Right ventricle myocardium superior (tissue), 1 donor: ENCODE measurements at regions of chr13 and their contacts with region 1.

Region 1: GRCh38 chr13:48595431-48596429 is 58.0 kb upstream of the CYSLTR2 start:
- DNase-seq: peak; percentile 66
- ATAC-seq: peak; percentile 96

Region 2: DNA sequence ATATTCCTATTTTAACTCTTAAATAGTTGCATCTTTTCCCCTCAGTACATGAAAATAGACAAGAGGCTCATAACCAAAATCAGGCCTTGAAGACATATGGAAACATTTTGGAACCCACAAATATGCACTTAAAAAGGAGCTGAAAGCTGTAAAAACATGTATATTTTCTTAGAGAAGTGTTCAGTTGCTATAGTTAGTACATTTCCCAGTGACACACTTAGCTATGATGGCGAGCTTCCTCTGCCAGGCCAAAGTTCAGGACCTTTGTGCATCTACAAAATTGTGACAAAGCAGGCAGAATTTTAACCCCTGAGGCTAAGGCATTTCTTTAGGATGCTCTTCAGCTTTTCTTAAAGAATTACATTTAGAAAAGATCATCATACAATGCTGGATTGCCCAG is 117.3 kb before region 1 on chr13:
- intact Hi-C with region 1: no loop called
- DNase-seq: no peak
- ATAC-seq: no peak

Region 3: DNA sequence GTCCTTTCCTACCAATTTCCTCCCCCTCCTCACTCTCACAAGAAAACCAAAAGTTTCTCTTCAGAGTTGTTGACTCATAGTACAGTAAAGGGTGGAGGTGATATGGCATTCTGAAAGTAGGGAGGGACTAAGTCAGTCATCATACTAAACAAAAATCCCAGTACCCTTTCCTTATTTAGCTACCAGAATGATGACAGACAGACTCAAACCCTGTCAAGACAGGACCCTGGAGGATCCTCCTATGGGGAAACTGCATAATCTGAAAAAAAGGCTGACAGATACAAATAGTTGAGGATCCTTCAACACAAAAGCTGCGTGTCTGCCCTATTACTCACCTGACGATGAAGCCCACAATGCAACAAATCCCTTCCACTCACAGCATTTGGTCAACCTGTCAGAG is 113.5 kb after region 1 on chr13:
- intact Hi-C with region 1: no loop called
- DNase-seq: no peak
- ATAC-seq: no peak

Region 4: DNA sequence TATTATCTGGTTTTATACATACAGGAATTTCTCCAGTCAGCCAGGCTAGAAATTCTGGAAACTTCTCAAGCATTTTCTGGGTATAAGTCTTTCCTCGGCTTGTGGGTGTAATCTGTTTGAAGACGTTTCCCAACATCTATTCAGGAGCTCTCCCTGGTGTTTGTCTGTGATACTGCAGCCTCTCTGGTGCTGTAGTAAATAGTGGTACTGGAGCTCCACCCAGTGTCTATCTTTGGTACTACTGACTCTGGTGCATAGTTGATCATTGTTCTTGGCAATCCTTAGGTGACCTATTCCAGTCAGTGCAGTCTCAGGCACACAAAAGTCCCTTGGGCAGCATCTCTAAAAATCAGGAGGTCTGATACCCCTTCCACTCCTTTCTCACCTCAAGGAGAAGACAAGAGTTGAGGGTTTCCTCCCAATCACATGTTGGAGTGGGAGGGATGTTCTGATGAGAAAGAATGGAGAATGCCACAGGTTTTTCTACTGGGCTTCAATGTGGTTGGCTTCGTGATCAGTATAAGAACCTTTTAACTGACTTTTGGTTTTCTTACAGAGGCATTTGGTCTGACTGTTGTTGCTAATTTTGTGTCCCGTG is 173.5 kb after region 1 on chr13:
- intact Hi-C with region 1: loop called (anchors 2 kb)
- DNase-seq: no peak
- ATAC-seq: peak; percentile 95

Region 5: DNA sequence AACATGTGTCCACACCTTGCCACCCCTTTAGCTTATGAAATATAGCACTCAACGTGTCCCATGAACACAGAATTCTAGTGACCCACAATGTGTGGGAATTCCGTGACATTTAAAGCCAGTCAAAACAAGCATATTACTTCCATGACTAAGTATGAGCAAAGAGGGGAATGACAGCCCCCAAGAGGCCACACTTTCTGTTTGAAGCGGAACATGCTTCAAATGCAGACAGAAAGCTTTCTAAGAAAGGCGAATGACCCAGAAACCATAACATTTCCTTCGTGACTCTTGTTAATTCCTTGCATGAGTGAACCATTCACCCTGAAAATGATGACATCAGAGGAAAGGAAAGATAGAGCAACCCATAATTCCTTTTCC is 258.0 kb after region 1 on chr13:
- intact Hi-C with region 1: no loop called
- DNase-seq: no peak
- ATAC-seq: no peak